CD4-positive, alpha-beta memory T cell (primary cell): ENCODE measurements at regions of chr4 and their contacts with region 1.

Region 1: DNA sequence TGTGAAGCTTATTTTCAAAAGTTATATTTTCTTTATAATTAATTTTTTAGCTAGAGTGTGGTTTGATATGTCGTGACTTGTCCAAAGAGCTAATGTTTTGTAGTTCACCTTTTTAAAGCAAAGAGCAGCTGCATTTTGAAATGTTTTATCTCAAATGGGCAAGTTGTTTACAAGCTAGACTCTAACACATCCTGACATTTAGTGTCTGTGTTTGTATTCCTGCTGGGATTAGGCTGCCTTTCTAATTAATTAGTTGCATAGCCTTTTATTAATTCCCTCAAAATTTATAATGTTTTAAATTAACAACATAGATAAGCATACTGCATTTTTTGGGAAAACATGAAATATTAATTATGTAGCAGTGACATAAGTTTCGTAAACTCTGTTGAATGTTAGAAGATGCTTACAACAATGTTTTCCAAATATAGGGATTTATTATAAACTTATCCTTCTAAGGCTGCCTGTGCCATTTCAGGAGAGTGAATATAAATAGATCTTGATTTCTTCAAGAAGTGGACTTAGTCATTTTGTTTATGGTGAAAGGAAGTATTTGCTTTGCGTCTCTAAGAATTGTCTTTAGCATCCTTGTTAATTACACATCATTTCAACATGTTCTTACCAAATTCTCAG is 37.7 kb upstream of the NUDT6 start:
- DNase-seq: no peak
- H3K4me3 ChIP-seq: no peak overlapping the region
- H3K4me3 Mint-ChIP-seq: no peak overlapping the region
- H3K27ac ChIP-seq: no peak overlapping the region
- H3K27ac Mint-ChIP-seq: no peak overlapping the region
- H3K4me1 ChIP-seq: no peaks in the 10 kb centered on the region
- H3K4me1 Mint-ChIP-seq: peaks cover 0 to 6% (median 6%) of the 10 kb centered on the region in 4 donors
- H3K27me3 ChIP-seq: no peaks in the 10 kb centered on the region
- H3K27me3 Mint-ChIP-seq: no peaks in the 10 kb centered on the region

Region 2: GRCh38 chr4:122992057-122992456 is 32.0 kb after region 1 on chr4:
- CTCF ChIA-PET with region 1: no interaction called
- POLR2A ChIA-PET with region 1: no interaction called
- intact Hi-C with region 1: loop called (anchors 2 kb)
- DNase-seq: no peak
- H3K4me3 ChIP-seq: no peak overlapping the region
- H3K4me3 Mint-ChIP-seq: no peak overlapping the region
- H3K27ac ChIP-seq: no peak overlapping the region
- H3K27ac Mint-ChIP-seq: no peak overlapping the region
- H3K4me1 ChIP-seq: no peaks in the 10 kb centered on the region
- H3K4me1 Mint-ChIP-seq: peaks cover 0 to 2% (median under 1%) of the 10 kb centered on the region in 4 donors
- H3K27me3 ChIP-seq: no peaks in the 10 kb centered on the region
- H3K27me3 Mint-ChIP-seq: no peaks in the 10 kb centered on the region